GM18951 (cell line): ENCODE measurements at regions of chr21 and their contacts with region 1.

Region 1: DNA sequence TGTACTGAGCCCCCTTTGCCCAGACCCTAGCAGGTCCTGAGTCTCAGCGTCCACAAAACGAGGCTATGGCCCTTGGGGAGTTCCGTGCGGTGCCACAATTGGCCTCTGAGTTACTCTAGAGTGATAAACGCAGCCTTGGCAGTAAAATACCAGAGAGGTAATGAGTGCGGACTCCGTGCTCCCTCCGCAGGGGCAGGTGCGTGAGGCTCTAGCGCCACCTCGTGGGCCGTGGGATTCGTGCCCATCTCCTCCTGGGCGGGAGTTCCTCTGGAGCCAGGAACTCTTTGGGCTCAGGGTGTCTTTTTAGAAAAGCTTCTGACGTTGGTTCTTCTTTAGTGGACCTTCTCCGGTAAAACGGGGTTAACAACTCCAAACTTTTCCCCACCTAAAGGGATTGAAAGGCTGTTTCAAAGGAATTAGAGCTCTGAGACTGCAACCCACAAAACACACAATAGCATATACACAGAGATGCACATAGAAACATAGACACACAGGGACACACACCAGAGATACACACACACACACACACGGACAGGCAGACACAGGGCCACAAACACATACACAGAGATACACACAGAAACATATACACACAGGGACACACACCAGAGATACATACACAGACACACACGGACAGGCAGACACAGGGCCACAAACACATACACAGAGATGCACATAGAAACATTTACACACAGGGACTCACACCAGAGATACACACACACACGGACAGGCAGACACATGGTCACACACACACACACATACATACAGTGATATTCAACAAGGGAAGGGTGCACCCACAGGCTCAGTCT is 99.4 kb downstream of the KCNJ15 start:
- POLR2A ChIP-seq: no peak

Region 2: GRCh38 chr21:37700641-37701202 is 655.5 kb before region 1 on chr21:
- in situ Hi-C with region 1: loop called (anchors 25 kb)
- POLR2A ChIP-seq: no peak

Region 3: GRCh38 chr21:38170280-38170679 is 185.9 kb before region 1 on chr21:
- in situ Hi-C with region 1: loop called (anchors 5 kb)
- POLR2A ChIP-seq: no peak

Region 4: DNA sequence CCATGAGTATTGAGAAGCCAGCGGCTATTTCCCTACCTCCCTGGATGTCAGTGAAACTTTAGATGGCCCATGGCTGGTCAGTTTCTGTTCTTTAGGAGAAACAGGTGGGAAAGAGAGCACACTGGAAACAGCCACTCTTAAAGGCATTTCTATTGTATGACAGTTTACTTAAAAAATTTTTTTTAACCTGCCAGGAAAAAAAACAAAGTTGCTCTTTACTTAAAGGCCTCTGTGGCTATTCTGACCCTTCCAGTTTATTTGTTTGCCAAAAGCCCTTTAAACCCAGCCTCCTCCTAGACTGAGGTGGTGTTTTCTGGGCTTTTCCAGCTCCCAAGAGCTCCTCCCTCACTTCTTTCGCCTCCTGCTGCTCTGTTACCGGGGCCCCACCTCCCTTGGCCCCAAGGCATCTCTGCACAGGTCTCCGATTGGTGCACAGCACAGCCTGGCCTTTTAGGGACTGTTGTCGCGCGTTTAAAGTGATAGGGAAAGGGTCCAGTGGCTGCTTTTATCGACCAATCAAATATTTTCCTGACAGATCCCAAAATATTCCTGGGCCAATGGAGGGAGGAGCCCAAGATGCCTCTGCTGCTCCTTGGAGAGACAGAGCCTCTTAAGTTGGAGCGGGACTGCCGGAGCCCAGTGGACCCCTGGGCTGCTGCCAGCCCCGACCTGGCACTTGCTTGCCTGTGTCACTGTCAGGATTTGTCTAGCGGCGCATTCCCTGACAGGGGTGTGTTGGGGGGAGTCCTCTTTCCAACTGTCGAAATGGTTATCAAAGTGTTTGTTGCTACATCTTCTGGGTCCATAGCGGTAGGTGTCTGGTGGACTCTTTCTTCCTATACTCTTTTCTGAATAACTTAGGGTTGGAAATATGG is 1095.4 kb after region 1 on chr21 and contains the start of gene SH3BGR:
- in situ Hi-C with region 1: no loop called
- POLR2A ChIP-seq: no peak